ENCODE measurements at regions of chr13 and their contacts with region 1.

Region 1: DNA sequence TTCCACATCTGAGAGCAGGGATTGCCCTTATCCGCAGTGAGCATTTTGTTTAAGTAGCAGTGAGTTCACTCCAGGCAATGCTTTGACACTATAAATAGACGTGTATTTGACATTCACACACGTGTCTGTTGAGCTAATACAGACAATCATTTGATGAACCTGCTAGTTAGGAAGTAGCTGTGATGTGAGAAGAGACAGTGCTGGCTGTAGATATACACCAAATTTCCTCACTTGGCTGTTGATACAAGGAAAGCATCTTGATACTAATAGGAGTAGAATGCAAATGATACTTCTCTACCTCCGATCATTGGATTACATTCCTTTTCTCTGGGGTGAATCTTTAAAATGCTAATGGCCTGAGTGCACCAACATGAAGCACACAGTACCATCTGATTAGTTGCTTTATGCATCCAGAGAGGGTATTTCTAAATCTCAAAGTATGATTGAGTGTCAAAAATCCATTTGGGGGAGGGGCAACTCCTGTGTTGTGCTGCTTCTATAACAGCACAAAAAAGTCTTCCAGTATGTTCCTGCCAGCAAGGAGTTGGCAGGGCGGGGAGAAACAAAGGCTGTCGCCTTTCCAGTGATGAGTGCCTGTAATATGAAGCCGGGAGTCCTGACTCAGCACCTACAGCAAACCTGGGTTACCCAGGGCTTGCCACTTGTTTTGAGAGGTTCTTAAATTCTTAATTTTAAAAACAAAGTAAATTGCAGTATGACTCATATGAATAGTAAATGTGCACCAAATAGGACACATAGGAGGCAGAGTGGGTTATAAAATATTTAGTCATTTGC is 7.0 kb downstream of the CUL4A start:
- DNase-seq: peak in 1 of 2 donors; percentile 51
- ATAC-seq: peak; percentile 75 to 91 (median 84)
- H3K4me3 ChIP-seq: no peak overlapping the region
- H3K27ac ChIP-seq: peak overlapping the region; percentile 38 to 83 (median 73)
- H3K4me1 ChIP-seq: peaks cover 10 to 98% (median 66%) of the 10 kb centered on the region in 9 donors
- H3K27me3 ChIP-seq: no peaks in the 10 kb centered on the region
- CTCF ChIP-seq: no peak

Region 2: DNA sequence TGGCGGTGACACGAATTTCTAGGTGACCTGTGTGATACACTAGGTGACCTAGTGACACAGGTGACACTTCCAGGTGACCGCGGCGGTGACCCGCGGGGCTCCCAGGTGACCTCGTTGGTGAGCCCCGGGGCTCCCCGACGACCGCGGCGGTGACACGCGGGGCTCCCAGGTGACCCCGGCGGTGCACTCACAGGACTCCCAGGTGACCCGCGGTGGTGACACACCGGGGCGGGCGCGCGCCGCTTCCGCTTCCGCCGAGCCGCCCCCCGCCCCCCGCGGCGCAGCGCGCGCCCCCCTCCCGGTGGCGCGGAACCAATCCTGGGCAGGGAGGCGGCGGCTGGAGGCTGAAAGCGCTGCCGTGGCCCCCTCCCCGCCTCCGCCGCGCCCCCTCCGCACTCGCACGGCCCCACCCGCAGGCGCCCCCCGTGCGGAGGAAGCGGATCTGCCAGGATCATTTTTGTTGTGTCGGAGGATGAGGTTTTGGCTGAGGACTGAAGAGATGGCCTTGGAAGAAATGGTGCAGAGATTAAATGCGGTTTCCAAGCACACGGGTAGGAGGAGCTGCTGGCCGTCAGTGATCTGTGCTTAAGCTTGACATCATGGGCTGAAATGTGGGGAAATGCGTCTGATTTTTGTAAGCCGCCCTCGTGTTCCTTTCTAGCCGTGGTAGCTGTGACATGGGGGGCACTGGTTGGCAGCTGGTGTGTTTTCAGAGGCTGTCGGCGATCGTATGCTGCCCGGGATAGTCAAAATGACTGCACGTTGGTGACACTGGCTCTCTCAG is 247.4 kb before region 1 on chr13 and contains the start of gene MCF2L:
- intact Hi-C with region 1: loop called in 1 of 10 experiments (anchors 5 kb)
- DNase-seq: peak; percentile 36 to 50
- ATAC-seq: peak; percentile 47 to 79 (median 64)
- H3K4me3 ChIP-seq: peak within 1 kb of the TSS; percentile 34 to 70 (median 58)
- H3K27ac ChIP-seq: peak within 1 kb of the TSS; percentile 2 to 91 (median 81)
- H3K4me1 ChIP-seq: peaks cover 3 to 39% (median 20%) of the 10 kb centered on the region in 9 donors
- H3K27me3 ChIP-seq: peaks cover 0 to 34% (median 7%) of the 10 kb centered on the region in 7 donors
- CTCF ChIP-seq: peak in 7 of 9 donors; percentile 16 to 59 (median 27)
- total RNA-seq, gene MCF2L: 29.6 to 99.8 (median 45.3) TPM

Region 3: DNA sequence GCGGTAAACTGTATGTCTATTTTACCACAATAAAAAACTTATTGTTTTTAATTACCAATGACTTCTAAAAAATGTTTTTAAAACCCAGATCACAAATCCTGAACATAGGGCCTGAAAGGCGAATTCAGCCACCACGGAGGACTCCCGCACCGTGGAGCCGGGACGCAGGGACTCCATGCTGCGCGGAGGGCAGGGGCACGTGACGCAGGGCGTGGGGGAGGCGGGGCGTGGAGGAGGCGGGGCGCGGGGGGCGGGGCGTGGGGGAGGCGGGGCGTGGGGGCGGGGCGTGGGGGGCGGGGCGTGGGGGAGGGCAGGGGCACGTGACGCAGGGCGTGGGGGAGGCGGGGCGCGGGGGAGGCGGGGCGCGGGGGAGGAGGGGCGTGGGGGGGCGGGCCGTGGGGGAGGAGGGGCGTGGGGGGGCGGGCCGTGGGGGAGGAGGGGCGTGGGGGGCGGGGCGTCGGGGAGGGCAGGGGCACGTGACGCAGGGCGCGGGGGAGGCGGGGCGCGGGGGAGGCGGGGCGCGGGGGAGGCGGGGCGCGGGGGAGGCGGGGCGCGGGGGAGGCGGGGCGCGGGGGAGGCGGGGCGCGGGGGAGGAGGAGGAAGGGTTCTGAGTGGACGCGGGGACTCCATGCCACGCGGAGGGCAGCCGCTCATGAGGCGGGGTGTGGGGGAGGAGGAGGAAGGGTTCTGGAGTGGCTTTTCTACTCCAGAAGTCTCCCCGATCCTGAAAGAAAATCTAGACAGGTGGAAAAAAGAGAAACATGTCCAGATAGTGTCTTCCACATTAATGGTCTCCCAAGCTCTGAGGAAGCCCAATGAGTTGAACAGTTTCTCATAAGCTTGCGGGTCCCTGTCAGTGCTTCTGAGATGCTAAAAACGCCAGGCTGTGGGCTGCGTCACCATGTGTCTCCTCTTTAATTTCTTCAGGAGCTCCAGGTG is 62.4 kb before region 1 on chr13:
- intact Hi-C with region 1: loop called in 2 of 10 experiments (anchors 2 to 10 kb)
- DNase-seq: peak; percentile 83 to 86
- ATAC-seq: peak; percentile 68 to 92 (median 86)
- H3K4me3 ChIP-seq: peak overlapping the region; percentile 39 to 62 (median 48)
- H3K27ac ChIP-seq: peak overlapping the region; percentile 53 to 93 (median 87)
- H3K4me1 ChIP-seq: peaks cover 8 to 25% (median 12%) of the 10 kb centered on the region in 9 donors
- H3K27me3 ChIP-seq: peaks cover 0 to 20% (median 1%) of the 10 kb centered on the region in 7 donors
- CTCF ChIP-seq: no peak